Common myeloid progenitor, CD34-positive (primary cell): ENCODE measurements at regions of chr7 and their contacts with region 1.

Region 1: DNA sequence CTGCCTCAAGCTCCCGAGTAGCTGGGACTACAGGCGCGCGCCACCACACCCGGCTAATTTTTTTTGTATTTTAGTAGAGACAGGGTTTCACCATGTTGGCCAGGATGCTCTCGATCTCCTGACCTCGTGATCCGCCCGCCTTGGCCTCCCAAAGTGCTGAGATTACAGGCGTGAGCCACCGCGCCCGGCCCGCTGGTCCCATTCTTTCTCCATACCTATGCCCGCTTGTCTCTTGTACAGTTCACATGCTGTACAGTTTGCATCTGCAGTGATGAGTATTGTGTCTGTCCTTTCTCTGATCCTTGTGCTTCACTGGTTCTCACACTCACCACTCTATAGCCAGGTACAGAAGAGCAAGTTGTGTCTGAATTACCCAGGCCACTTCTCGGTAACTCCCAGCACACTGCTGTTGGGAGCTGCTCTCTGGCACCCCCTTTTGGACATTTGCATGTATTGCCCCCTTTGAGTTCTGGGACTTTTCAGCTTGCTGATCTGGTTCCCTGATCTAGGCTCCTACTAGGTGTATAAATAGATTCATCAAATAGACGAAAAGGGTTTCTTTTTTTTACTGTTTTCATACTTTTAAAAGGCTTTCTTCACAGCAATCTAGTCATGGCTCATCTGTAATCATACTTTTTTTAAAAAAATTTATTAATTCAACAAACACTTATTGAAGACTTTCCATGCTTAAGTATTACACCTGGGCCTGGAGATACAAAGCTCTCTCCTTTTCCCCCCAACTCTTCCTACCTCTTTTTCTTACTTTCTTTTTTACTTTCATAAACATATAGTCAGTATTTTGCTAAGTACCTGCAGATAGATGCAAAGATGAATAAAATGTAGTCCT is 53.5 kb downstream of the AOAH start:
- DNase-seq: peak; percentile 75 to 88 (median 82)
- H3K4me3 ChIP-seq: no peak overlapping the region
- H3K27ac ChIP-seq: no peak overlapping the region
- H3K4me1 ChIP-seq: peaks cover 0 to 27% (median 15%) of the 10 kb centered on the region in 4 experiments
- H3K27me3 ChIP-seq: no peaks in the 10 kb centered on the region

Region 2: GRCh38 chr7:36487756-36488336 is 183.0 kb before region 1 on chr7:
- CTCF ChIA-PET with region 1: interaction called, 66 read pairs
- POLR2A ChIA-PET with region 1: no interaction called
- DNase-seq: peak; percentile 75 to 88 (median 85)
- H3K4me3 ChIP-seq: no peak overlapping the region
- H3K27ac ChIP-seq: no peak overlapping the region
- H3K4me1 ChIP-seq: peaks cover 0 to 8% (median 1%) of the 10 kb centered on the region in 4 experiments
- H3K27me3 ChIP-seq: no peaks in the 10 kb centered on the region

Region 3: DNA sequence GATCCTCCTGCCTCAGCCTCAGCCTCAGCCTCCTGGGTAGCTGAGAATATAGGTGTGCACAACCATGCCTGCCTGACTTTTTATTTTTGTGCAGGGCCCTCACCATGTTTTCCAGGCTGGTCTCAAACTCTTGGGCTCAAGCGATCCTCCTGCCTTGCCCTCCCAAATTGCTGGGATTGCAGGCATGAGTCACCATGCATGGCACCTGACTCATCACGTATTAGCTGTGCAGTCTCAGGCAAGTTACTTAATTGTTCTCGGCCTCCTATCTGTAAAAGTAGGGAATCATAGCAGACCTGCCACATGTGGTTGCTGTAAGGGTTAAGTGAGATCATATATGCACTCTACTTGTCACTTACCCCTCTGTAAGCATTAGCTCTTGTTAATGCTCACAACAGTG is 164.0 kb before region 1 on chr7:
- CTCF ChIA-PET with region 1: interaction called, 10 read pairs
- POLR2A ChIA-PET with region 1: no interaction called
- DNase-seq: no peak
- H3K4me3 ChIP-seq: no peak overlapping the region
- H3K27ac ChIP-seq: no peak overlapping the region
- H3K4me1 ChIP-seq: no peaks in the 10 kb centered on the region
- H3K27me3 ChIP-seq: no peaks in the 10 kb centered on the region

Region 4: DNA sequence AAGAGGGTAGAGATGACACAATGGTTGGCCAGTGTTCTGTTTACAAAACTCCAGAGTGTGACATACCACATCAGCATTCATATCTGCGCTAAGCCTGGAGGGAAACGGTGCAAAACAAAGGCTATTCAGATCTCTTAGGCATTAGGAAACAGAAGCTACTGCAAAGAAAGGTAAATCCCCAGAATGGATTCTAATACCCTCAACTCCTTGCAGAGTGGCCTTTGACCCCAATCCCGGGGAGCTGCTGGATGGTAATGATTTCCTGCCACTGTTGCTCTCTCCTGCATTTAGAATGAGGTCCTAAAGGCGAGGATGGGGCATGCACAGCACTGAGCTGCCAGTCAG is 11.7 kb before region 1 on chr7:
- CTCF ChIA-PET with region 1: interaction called, 13 read pairs
- POLR2A ChIA-PET with region 1: no interaction called
- DNase-seq: no peak
- H3K4me3 ChIP-seq: no peak overlapping the region
- H3K27ac ChIP-seq: no peak overlapping the region
- H3K4me1 ChIP-seq: no peaks in the 10 kb centered on the region
- H3K27me3 ChIP-seq: no peaks in the 10 kb centered on the region

Region 5: DNA sequence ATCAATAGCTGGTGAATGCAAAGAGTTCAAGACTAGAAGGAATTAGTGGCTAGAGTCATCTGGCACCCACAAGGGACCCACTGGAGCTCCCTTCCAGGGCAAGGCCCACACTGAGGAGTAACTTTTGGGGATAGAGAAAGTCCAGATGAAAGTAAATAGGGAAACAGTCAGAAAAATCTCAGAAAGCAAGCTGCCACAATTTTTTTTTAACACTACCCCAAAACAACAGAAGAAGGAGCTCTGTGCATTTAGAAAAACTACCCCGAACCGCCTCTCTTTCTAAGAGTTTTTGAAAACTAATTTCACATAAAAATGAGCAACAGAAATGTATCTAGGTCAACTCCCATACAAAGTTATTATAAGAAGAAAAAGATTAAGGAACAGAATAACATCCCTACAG is 11.3 kb after region 1 on chr7:
- CTCF ChIA-PET with region 1: interaction called, 12 read pairs
- POLR2A ChIA-PET with region 1: no interaction called
- DNase-seq: no peak
- H3K4me3 ChIP-seq: no peak overlapping the region
- H3K27ac ChIP-seq: no peak overlapping the region
- H3K4me1 ChIP-seq: peaks cover 9 to 20% (median 14%) of the 10 kb centered on the region in 4 experiments
- H3K27me3 ChIP-seq: no peaks in the 10 kb centered on the region

Region 6: DNA sequence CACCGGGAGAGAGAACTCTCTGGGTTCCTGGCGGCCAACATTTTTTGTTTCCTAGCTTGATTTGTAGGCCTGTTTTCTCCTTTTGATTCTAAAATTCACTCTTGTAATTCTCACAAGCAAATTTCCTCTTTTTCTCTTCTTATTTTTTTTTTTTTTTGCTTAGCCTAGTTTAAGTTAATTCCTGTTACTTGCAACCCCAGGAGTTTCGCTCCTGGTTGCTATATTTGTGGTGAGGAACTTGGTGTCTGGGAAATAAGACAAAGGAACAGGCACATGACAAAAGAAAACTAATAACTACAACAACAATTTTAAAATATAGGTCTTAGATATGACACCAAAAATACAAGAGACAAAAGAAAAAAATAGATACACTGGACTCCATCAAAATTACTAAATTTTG is 46.8 kb after region 1 on chr7:
- CTCF ChIA-PET with region 1: no interaction called
- POLR2A ChIA-PET with region 1: no interaction called
- DNase-seq: no peak
- H3K4me3 ChIP-seq: no peak overlapping the region
- H3K27ac ChIP-seq: no peak overlapping the region
- H3K4me1 ChIP-seq: peaks cover 0 to 8% (median 1%) of the 10 kb centered on the region in 4 experiments
- H3K27me3 ChIP-seq: peaks cover 0 to 3% (median 0%) of the 10 kb centered on the region in 5 experiments